ENCODE measurements at regions of chr14 and their contacts with region 1.

Region 1: GRCh38 chr14:84555493-84555892 is 974.5 kb upstream of the FLRT2 start:
- DNase-seq: no peak
- H3K4me3 ChIP-seq: no peak overlapping the region
- H3K27ac ChIP-seq: no peak overlapping the region
- H3K4me1 ChIP-seq: no peaks in the 10 kb centered on the region
- H3K27me3 ChIP-seq: no peaks in the 10 kb centered on the region
- CTCF ChIP-seq: no peak
- POLR2A ChIP-seq: no peak

Region 2: DNA sequence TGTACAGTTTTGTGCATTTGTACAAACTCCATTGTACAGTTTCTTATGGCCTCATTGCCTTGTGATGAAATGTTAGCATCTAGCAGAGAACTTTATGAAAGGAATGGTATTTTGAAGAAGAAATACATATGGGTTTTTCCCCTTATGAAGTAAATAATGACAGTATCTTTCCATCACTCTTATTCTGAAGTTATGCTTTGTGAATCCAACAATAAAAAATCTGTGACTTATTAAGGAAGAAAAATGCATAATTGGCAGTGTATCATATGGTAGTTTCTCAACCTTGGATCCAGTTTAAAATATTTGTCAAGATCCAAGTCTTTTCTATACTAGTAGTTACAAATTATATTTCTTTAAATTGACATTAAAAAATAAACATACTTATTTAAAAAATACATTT is 115.3 kb after region 1 on chr14:
- intact Hi-C with region 1: no loop called
- DNase-seq: no peak
- H3K4me3 ChIP-seq: no peak overlapping the region
- H3K27ac ChIP-seq: no peak overlapping the region
- H3K4me1 ChIP-seq: no peaks in the 10 kb centered on the region
- H3K27me3 ChIP-seq: no peaks in the 10 kb centered on the region
- CTCF ChIP-seq: no peak
- POLR2A ChIP-seq: no peak

Region 3: DNA sequence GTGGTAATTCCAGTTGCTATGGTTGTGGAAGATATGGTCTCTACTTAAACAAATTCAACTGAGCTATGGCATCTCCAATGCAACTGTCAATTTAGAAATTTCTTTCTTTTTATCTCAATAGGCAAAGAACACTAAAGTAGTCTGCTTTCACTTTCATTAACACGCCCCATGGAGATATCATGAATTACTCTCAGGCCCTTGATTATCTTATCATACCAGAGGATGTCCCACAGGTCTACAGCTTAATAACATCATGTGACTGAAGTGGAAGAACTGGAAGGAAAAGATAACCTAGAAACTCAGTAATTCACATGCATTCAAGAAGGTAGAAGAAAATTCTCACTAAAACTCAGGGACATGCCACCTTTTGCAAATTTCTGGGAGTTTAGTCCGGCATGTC is 1088.7 kb after region 1 on chr14:
- intact Hi-C with region 1: loop called (anchors 10 kb)
- DNase-seq: no peak
- H3K4me3 ChIP-seq: no peak overlapping the region
- H3K27ac ChIP-seq: no peak overlapping the region
- H3K4me1 ChIP-seq: no peaks in the 10 kb centered on the region
- H3K27me3 ChIP-seq: no peaks in the 10 kb centered on the region
- CTCF ChIP-seq: no peak
- POLR2A ChIP-seq: no peak

Region 4: DNA sequence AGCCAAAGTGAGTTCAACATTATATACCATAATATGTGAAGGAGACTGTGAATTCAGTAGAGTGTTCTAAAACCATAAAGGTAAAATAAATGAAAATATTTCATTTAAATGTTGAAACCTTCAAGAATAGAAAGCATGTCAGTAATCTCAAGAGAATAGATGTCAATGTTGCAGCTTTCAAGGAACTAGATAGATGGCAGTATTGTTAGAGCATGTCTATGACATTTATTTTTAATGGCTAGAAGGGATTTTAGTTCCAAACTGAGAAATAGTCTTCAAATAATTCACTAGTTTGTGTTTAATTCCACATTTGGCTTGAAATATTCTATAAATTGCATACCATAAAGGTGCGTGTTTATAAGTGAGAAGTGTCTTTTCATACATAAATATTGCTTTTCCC is 1300.9 kb after region 1 on chr14:
- intact Hi-C with region 1: no loop called
- DNase-seq: no peak
- H3K4me3 ChIP-seq: no peak overlapping the region
- H3K27ac ChIP-seq: no peak overlapping the region
- H3K4me1 ChIP-seq: no peaks in the 10 kb centered on the region
- H3K27me3 ChIP-seq: no peaks in the 10 kb centered on the region
- CTCF ChIP-seq: no peak
- POLR2A ChIP-seq: no peak